ENCODE measurements at regions of chr17 and their contacts with region 1.

Region 1: GRCh38 chr17:17812211-17813057 is 24.4 kb downstream of the SREBF1 start:
- DNase-seq: peak; percentile 95
- H3K4me3 ChIP-seq: peak overlapping the region in 1 of 2 experiments; percentile 30; a peak in 1 of 4 replicates
- H3K27ac ChIP-seq: peak overlapping the region in 1 of 2 experiments; percentile 62; a peak in 2 of 4 replicates
- H3K4me1 ChIP-seq: peaks cover 0 to 56% of the 10 kb centered on the region in 2 experiments; a peak in 3 of 4 replicates
- H3K27me3 ChIP-seq: no peaks in the 10 kb centered on the region
- CTCF ChIP-seq: peak; percentile 98
- EP300 ChIP-seq: no peak
- RAD21 ChIP-seq: peak; percentile 80

Region 2: GRCh38 chr17:17706140-17707060 is 106.0 kb before region 1 on chr17:
- CTCF ChIA-PET with region 1: no interaction called
- POLR2A ChIA-PET with region 1: no interaction called
- DNase-seq: no peak
- H3K4me3 ChIP-seq: no peak overlapping the region
- H3K27ac ChIP-seq: no peak overlapping the region; a peak in 1 of 4 replicates
- H3K4me1 ChIP-seq: peaks cover 11 to 35% of the 10 kb centered on the region in 2 experiments; a peak in 3 of 4 replicates
- H3K27me3 ChIP-seq: no peaks in the 10 kb centered on the region
- CTCF ChIP-seq: no peak
- EP300 ChIP-seq: no peak
- RAD21 ChIP-seq: no peak

Region 3: DNA sequence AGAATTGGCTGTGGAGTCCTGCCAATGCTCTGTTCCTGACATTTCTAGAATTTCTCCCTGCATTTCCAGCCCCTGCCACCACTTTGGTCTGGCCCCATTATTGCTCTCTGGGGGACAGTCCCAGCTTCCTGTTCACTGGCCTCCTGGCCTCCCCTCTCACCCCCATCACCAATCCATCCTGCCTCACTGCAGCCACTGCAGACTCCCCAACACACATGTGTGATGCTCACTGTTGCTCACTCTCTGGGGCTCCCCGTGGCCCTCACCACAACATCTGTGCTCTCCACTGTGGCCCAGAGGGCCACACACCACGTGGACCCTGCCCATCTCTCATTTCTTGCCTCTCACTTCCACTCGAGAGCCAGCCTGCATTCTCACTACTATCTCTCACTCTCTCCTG is 40.2 kb before region 1 on chr17:
- CTCF ChIA-PET with region 1: no interaction called
- POLR2A ChIA-PET with region 1: no interaction called
- DNase-seq: no peak
- H3K4me3 ChIP-seq: no peak overlapping the region
- H3K27ac ChIP-seq: no peak overlapping the region
- H3K4me1 ChIP-seq: peaks cover 7 to 55% of the 10 kb centered on the region in 2 experiments; a peak in 2 of 4 replicates
- H3K27me3 ChIP-seq: no peaks in the 10 kb centered on the region
- CTCF ChIP-seq: no peak
- EP300 ChIP-seq: no peak
- RAD21 ChIP-seq: no peak

Region 4: DNA sequence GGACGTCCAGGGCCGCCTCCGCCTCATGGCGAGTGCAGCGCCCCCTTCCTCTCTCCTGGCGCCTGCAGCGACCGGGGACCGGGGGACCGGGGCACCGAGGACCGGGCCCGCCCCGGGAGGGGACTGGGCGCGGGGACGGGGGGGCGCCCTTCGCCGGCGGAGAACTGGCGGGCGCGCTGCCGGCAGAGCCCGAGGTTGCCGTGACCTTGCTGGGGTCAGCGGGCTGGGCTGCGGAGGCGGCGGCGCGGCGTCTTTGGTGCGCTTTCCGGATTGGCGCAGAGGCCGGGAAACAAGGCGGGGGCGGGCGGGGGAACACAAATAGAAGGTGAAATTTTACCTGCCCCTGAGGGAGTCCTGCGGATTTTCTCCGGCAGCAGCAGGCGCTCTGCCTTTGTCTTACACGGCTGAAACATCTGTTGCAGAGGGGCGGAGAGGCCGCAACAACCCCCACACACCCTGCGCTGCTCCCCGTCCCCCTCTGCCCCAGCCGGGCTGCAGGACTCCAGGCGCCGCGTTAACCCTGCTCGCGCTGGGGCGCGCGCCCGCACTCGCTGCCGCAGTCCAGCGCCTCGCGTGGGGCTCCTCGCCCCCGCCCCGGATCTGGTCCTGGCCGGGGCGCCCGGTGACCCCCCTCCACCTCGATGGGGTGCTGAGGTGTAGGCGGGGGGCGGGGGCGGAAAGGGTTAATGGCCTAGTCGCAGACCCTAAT is 29.2 kb before region 1 on chr17:
- CTCF ChIA-PET with region 1: interaction called, 22 read pairs
- POLR2A ChIA-PET with region 1: interaction called, 4 read pairs
- DNase-seq: peak; percentile 76
- H3K4me3 ChIP-seq: peak overlapping the region; percentile 35 to 52; a peak in 3 of 4 replicates
- H3K27ac ChIP-seq: peak overlapping the region in 1 of 2 experiments; percentile 95; a peak in 2 of 4 replicates
- H3K4me1 ChIP-seq: peaks cover 22 to 77% of the 10 kb centered on the region in 2 experiments
- H3K27me3 ChIP-seq: no peaks in the 10 kb centered on the region
- CTCF ChIP-seq: peak; percentile 35
- EP300 ChIP-seq: no peak
- RAD21 ChIP-seq: no peak

Region 5: DNA sequence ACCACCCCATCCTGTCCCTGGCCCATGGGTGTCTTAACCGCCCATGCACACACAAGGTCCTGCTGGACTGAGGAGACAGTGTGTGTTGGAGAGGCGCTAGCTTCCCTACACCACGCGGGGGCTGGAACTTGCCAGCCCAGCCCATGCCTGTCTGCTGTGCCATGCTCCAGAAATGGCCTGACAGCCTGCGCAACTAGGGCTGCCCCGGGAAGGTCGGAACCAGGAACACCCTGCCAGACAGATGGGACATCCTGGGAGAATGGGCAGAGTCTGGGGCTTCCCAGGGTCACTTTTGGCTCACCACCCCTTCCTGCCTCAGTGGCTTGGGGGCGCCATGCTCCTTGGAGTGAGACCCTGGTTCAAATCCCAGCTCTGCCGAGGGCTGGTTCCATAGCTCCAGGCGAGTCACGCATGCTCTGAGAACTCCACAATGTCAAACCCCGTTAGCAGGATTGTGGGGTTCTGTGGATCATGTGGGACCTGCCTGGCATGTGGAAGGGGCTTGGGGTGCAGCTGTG is 11.9 kb before region 1 on chr17:
- CTCF ChIA-PET with region 1: interaction called, 14 read pairs
- POLR2A ChIA-PET with region 1: no interaction called
- DNase-seq: no peak
- H3K4me3 ChIP-seq: no peak overlapping the region
- H3K27ac ChIP-seq: no peak overlapping the region; a peak in 1 of 4 replicates
- H3K4me1 ChIP-seq: peaks cover 0 to 8% of the 10 kb centered on the region in 2 experiments; a peak in 1 of 4 replicates
- H3K27me3 ChIP-seq: no peaks in the 10 kb centered on the region
- CTCF ChIP-seq: no peak
- EP300 ChIP-seq: no peak
- RAD21 ChIP-seq: no peak

Region 6: DNA sequence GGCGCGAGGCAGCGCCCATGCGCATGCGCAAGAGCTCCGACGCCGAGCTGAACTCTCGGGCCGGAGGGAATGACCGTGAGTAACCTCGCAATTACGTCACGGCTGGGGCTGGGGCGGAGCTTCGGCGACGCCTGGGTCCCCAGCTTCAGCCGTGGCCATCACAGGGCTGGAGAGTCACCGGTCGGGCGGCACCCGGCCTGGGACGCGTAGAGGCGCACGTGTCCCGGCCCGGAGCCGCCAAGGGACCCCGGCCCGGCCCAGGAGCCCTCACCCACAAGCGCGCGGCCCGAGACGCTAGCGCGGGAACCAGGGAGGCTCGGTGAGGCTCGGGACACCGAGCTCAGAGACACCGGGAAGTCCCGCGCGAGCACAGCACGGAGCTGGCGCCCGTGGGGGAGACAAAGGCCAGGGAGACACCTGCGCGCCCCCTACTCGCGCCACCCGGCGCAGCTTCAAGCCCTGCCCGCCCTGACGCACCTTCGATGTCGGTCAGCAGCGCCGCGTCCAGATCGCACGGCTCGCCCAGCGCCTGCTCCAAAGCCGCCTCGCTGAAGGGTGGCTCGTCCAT is 23.9 kb after region 1 on chr17:
- CTCF ChIA-PET with region 1: interaction called, 32 read pairs
- POLR2A ChIA-PET with region 1: interaction called, 8 read pairs
- DNase-seq: peak; percentile 96
- H3K4me3 ChIP-seq: peak overlapping the region; percentile 75 to 79
- H3K27ac ChIP-seq: peak overlapping the region; percentile 69 to 95
- H3K4me1 ChIP-seq: peaks cover 22 to 63% of the 10 kb centered on the region in 2 experiments; a peak in 3 of 4 replicates
- H3K27me3 ChIP-seq: no peaks in the 10 kb centered on the region
- CTCF ChIP-seq: no peak
- EP300 ChIP-seq: no peak; a peak in 1 of 4 replicates
- RAD21 ChIP-seq: peak; percentile 11

Region 7: DNA sequence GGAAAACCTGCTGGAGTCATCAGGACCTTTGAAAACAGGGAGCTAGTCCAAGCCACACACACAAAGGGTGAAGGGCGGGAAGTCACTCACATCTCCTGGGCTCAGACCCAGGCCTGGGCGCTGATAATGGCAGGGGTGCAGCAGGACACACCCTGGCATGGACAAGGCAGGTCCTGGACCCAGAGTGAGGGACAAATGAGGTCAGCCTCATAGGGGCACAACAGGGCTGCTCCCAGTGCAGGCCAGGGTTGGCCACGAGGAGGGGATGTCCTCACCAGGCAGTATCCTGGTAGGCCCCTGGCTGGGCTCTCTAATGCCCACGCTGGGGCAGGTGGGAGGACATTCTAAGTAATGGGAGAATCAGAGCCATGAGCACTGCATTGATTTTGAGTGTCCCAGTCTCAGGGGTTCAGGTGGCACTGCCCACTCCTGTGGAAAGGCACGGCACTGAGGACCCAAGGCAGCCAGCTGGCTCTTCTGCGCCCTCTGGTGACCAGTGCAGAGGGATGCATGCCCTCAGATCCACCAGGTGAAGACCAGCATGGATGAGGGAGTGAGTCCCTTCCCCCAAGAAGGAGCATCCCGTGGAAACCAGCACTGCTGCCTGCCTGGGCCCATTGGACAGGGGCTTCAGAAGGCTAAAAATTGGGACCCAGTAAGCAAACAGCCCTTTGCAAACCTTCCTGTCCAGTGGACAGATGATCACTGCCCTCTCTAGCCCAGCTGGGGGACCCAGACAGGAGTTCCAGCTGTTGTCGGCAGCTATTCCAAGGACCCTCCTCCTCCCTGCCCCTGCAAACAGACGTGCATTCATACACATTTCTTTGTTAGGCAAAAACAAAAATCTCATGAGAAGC is 47.7 kb after region 1 on chr17:
- CTCF ChIA-PET with region 1: interaction called, 72 read pairs
- POLR2A ChIA-PET with region 1: interaction called, 4 read pairs
- DNase-seq: peak; percentile 84
- H3K4me3 ChIP-seq: no peak overlapping the region; a peak in 1 of 4 replicates
- H3K27ac ChIP-seq: no peak overlapping the region; a peak in 1 of 4 replicates
- H3K4me1 ChIP-seq: peaks cover 0 to 47% of the 10 kb centered on the region in 2 experiments; a peak in 1 of 4 replicates
- H3K27me3 ChIP-seq: no peaks in the 10 kb centered on the region
- CTCF ChIP-seq: peak; percentile 92
- EP300 ChIP-seq: no peak
- RAD21 ChIP-seq: peak; percentile 95

Region 8: GRCh38 chr17:17890773-17891759 is 78.6 kb after region 1 on chr17:
- CTCF ChIA-PET with region 1: interaction called, 11 read pairs
- POLR2A ChIA-PET with region 1: no interaction called
- DNase-seq: peak; percentile 71
- H3K4me3 ChIP-seq: no peak overlapping the region
- H3K27ac ChIP-seq: peak overlapping the region in 1 of 2 experiments; percentile 43; a peak in 1 of 4 replicates
- H3K4me1 ChIP-seq: peaks cover 0 to 31% of the 10 kb centered on the region in 2 experiments; a peak in 1 of 4 replicates
- H3K27me3 ChIP-seq: no peaks in the 10 kb centered on the region
- CTCF ChIP-seq: peak; percentile 79
- EP300 ChIP-seq: no peak
- RAD21 ChIP-seq: peak; percentile 94

Region 9: GRCh38 chr17:18021372-18021771 is 208.9 kb after region 1 on chr17:
- CTCF ChIA-PET with region 1: no interaction called
- POLR2A ChIA-PET with region 1: no interaction called
- DNase-seq: no peak
- H3K4me3 ChIP-seq: no peak overlapping the region
- H3K27ac ChIP-seq: no peak overlapping the region
- H3K4me1 ChIP-seq: peaks cover 9 to 50% of the 10 kb centered on the region in 2 experiments; a peak in 2 of 4 replicates
- H3K27me3 ChIP-seq: no peaks in the 10 kb centered on the region
- CTCF ChIP-seq: no peak
- EP300 ChIP-seq: no peak
- RAD21 ChIP-seq: no peak

Measured in SK-N-SH (cell line).